Naive thymus-derived CD4-positive, alpha-beta T cell (primary cell): ENCODE measurements at regions of chr6 and their contacts with region 1.

Region 1: GRCh38 chr6:136822376-136823127 is at the start of gene PEX7:
- DNase-seq: peak; percentile 83 to 94 (median 92)
- ATAC-seq: peak; percentile 95
- H3K4me3 ChIP-seq: peak within 1 kb of the TSS; percentile 96
- H3K4me3 Mint-ChIP-seq: peak within 1 kb of the TSS; percentile 87 to 99 (median 94)
- H3K27ac ChIP-seq: peak within 1 kb of the TSS; percentile 91
- H3K27ac Mint-ChIP-seq: peak within 1 kb of the TSS; percentile 91 to 99 (median 96)
- H3K4me1 ChIP-seq: peaks cover 6 to 13% of the 10 kb centered on the region in 2 donors
- H3K4me1 Mint-ChIP-seq: peaks cover 13 to 50% (median 40%) of the 10 kb centered on the region in 7 donors
- H3K27me3 ChIP-seq: peaks cover 0 to 3% of the 10 kb centered on the region in 2 donors
- H3K27me3 Mint-ChIP-seq: peaks cover 3 to 10% (median 8%) of the 10 kb centered on the region in 5 donors
- total RNA-seq, gene PEX7: 4.0 to 6.2 (median 5.4) TPM

Region 2: GRCh38 chr6:136249811-136250685 is 572.5 kb before region 1 on chr6 and contains the start of gene MTFR2:
- CTCF ChIA-PET with region 1: no interaction called
- POLR2A ChIA-PET with region 1: no interaction called
- intact Hi-C with region 1: loop called in 1 of 2 experiments (anchors 5 kb)
- DNase-seq: peak; percentile 74 to 97 (median 93)
- ATAC-seq: peak; percentile 95
- H3K4me3 ChIP-seq: peak within 1 kb of the TSS; percentile 81
- H3K4me3 Mint-ChIP-seq: peak within 1 kb of the TSS; percentile 91 to 99 (median 94)
- H3K27ac ChIP-seq: peak within 1 kb of the TSS; percentile 59
- H3K27ac Mint-ChIP-seq: peak within 1 kb of the TSS; percentile 47 to 89 (median 80)
- H3K4me1 ChIP-seq: peaks cover 7 to 15% of the 10 kb centered on the region in 2 donors
- H3K4me1 Mint-ChIP-seq: peaks cover 6 to 62% (median 43%) of the 10 kb centered on the region in 7 donors
- H3K27me3 ChIP-seq: no peaks in the 10 kb centered on the region
- H3K27me3 Mint-ChIP-seq: no peaks in the 10 kb centered on the region
- total RNA-seq, gene MTFR2: 0.92 to 20.4 (median 1.9) TPM

Region 3: DNA sequence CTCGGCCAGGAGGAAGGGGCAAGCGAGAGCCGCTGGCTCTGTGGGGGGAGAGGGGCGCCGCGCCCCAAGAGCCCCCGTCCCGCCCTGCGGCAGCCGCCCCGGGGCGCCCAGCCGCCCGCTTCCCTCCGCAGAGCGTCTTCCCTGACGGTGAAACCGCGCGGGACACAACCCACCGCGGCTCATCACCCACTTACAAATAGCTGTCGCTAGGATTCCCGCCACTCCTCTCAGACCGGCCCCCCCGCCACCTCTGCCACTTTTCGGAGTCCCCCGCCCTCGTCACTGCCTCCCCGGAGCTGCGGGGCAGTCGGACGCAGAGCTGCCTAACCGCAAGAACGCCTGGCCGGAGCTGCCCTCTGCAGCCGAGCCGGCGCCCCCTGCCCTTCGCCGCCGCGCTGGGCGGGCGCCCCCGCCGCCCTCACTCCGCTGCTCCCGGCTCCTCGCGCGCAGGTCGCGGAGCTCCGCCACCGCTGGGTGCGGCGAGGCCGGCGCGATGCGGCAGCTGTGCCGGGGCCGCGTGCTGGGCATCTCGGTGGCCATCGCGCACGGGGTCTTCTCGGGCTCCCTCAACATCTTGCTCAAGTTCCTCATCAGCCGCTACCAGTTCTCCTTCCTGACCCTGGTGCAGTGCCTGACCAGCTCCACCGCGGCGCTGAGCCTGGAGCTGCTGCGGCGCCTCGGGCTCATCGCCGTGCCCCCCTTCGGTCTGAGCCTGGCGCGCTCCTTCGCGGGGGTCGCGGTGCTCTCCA is 99.6 kb after region 1 on chr6 and contains the start of gene SLC35D3:
- CTCF ChIA-PET with region 1: interaction called, 3 read pairs
- POLR2A ChIA-PET with region 1: no interaction called
- intact Hi-C with region 1: loop called (anchors 1 to 10 kb)
- DNase-seq: peak in 4 of 9 donors; percentile 13 to 34 (median 17)
- ATAC-seq: peak; percentile 44
- H3K4me3 ChIP-seq: peak within 1 kb of the TSS; percentile 13
- H3K4me3 Mint-ChIP-seq: peak within 1 kb of the TSS; percentile 79 to 90 (median 84)
- H3K27ac ChIP-seq: no peak within 1 kb of the TSS
- H3K27ac Mint-ChIP-seq: no peak within 1 kb of the TSS
- H3K4me1 ChIP-seq: peaks cover 12 to 19% of the 10 kb centered on the region in 2 donors
- H3K4me1 Mint-ChIP-seq: peaks cover 16 to 31% (median 19%) of the 10 kb centered on the region in 7 donors
- H3K27me3 ChIP-seq: peaks cover 7 to 14% of the 10 kb centered on the region in 2 donors
- H3K27me3 Mint-ChIP-seq: peaks cover 49 to 74% (median 56%) of the 10 kb centered on the region in 5 donors
- total RNA-seq, gene SLC35D3: 0.16 TPM in 1 of 5 experiments, not detected in the others

Region 4: GRCh38 chr6:136927292-136927691 is 104.7 kb after region 1 on chr6:
- CTCF ChIA-PET with region 1: no interaction called
- POLR2A ChIA-PET with region 1: no interaction called
- intact Hi-C with region 1: loop called (anchors 1 to 10 kb)
- DNase-seq: peak in 2 of 9 donors; percentile 10 to 18
- ATAC-seq: peak; percentile 38
- H3K4me3 ChIP-seq: no peak overlapping the region
- H3K4me3 Mint-ChIP-seq: no peak overlapping the region
- H3K27ac ChIP-seq: no peak overlapping the region
- H3K27ac Mint-ChIP-seq: no peak overlapping the region
- H3K4me1 ChIP-seq: peaks cover 0 to 4% of the 10 kb centered on the region in 2 donors
- H3K4me1 Mint-ChIP-seq: peaks cover 0 to 12% (median 6%) of the 10 kb centered on the region in 7 donors
- H3K27me3 ChIP-seq: no peaks in the 10 kb centered on the region
- H3K27me3 Mint-ChIP-seq: peaks cover 36 to 65% (median 46%) of the 10 kb centered on the region in 5 donors

Region 5: DNA sequence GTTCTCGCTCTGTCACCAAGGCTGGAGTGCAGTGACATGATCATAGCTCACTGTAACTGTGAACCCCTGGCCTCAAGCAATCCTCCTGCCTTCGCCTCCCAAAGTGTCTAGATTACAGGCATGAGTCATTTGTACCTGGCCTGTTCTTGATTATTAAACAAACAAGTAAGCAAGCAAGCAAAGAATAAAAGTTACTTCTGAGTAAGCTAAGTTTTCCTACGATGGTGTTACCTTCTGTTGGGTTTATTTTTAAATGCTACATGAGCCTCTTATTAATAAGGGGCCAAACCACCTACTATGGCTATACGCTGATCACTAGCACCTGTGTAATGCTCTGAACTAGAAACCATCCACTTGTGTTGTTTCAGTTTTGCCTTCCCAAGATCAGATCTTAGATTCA is 300.1 kb after region 1 on chr6:
- CTCF ChIA-PET with region 1: no interaction called
- POLR2A ChIA-PET with region 1: no interaction called
- intact Hi-C with region 1: no loop called
- DNase-seq: no peak
- ATAC-seq: no peak
- H3K4me3 ChIP-seq: no peak overlapping the region
- H3K4me3 Mint-ChIP-seq: no peak overlapping the region
- H3K27ac ChIP-seq: no peak overlapping the region
- H3K27ac Mint-ChIP-seq: no peak overlapping the region
- H3K4me1 ChIP-seq: no peaks in the 10 kb centered on the region
- H3K4me1 Mint-ChIP-seq: peaks cover 0 to 9% (median 0%) of the 10 kb centered on the region in 7 donors
- H3K27me3 ChIP-seq: no peaks in the 10 kb centered on the region
- H3K27me3 Mint-ChIP-seq: peaks cover 0 to 15% (median 4%) of the 10 kb centered on the region in 5 donors